ENCODE measurements at regions of chr14 and their contacts with region 1.

Region 1: DNA sequence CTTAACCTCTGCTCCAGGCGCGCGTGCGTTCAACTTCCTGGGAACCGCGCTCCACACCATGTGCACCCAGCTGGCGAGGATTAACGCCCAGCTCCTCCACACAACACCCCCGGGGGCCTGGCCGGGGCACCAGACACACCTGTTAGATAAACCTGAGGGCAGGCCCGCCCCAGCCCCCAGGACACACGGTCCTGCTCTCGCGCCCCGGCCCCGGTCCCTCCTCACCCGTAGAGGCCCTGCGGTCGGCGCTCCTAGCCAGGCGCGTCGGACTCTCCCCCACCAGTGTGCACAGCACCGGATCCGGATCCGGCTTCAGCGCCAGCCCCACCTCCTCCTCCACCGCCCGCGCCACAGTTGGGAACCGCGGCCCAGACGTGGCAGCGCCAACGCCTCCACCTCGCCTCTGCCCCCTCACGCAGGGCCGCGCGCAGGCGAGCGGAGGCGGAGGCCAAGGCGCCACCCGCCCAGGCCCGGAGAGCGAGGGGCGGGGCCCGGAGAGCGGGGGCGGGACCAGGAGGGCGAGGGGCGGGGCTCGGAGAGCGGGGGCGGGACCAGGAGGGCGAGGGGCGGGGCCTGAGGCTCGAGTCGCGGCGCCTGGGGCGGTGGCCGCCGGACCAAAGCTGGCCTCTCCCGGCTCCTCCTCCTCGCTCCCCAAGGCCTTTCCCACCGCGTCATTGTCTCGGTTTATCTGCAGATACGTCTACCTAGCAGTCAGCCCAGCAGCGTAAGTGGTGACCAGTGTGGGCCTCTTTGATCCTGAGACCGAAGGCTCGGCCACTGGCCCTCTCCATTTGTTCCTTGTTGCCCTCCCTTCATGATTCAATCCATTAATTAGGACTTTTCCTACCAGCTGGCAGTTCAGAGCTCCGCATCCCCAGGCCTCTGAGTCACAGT is at the start of gene GNPNAT1:
- DNase-seq: peak; percentile 90
- ATAC-seq: peak; percentile 91
- H3K4me3 Mint-ChIP-seq: peak within 1 kb of the TSS; percentile 95
- H3K27ac Mint-ChIP-seq: peak within 1 kb of the TSS; percentile 80
- H3K4me1 Mint-ChIP-seq: peaks cover 33% of the 10 kb centered on the region
- H3K27me3 Mint-ChIP-seq: no peaks in the 10 kb centered on the region
- total RNA-seq, gene GNPNAT1: 31.1 to 33.6 TPM

Region 2: GRCh38 chr14:51759950-51760349 is 1031.5 kb before region 1 on chr14:
- CTCF ChIA-PET with region 1: no interaction called
- POLR2A ChIA-PET with region 1: no interaction called
- intact Hi-C with region 1: no loop called
- DNase-seq: no peak
- ATAC-seq: no peak
- H3K4me3 Mint-ChIP-seq: no peak overlapping the region
- H3K27ac Mint-ChIP-seq: no peak overlapping the region
- H3K4me1 Mint-ChIP-seq: peaks cover 7% of the 10 kb centered on the region
- H3K27me3 Mint-ChIP-seq: peaks cover 7% of the 10 kb centered on the region

Region 3: DNA sequence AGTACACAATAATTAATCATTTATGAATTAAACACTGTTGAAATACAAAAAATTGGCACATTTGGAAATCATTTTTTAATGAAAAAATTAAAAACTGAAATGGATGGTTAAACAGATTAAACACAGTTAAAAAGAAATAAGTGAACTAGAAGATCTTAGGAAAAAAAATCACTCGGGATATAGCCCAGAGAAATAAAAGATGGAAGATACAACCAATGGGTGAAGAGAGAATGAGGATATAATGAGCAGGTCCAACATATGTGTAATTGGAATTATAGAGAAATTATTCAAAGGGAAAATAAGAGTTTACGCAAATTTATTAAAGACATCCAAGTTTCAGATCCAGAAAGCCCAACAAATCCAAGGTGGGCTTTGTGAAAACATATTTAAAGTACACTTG is 232.8 kb before region 1 on chr14:
- CTCF ChIA-PET with region 1: no interaction called
- POLR2A ChIA-PET with region 1: no interaction called
- intact Hi-C with region 1: no loop called
- DNase-seq: no peak
- ATAC-seq: no peak
- H3K4me3 Mint-ChIP-seq: no peak overlapping the region
- H3K27ac Mint-ChIP-seq: no peak overlapping the region
- H3K4me1 Mint-ChIP-seq: peaks cover under 1% of the 10 kb centered on the region
- H3K27me3 Mint-ChIP-seq: peaks cover 6% of the 10 kb centered on the region

Region 4: GRCh38 chr14:52706724-52707706 is 84.4 kb before region 1 on chr14 and contains the start of gene PSMC6:
- CTCF ChIA-PET with region 1: interaction called, 4 read pairs
- POLR2A ChIA-PET with region 1: no interaction called
- intact Hi-C with region 1: loop called (anchors 1 to 2 kb)
- DNase-seq: peak; percentile 98
- ATAC-seq: peak; percentile 96
- H3K4me3 Mint-ChIP-seq: peak within 1 kb of the TSS; percentile 91
- H3K27ac Mint-ChIP-seq: peak within 1 kb of the TSS; percentile 92
- H3K4me1 Mint-ChIP-seq: peaks cover 41% of the 10 kb centered on the region
- H3K27me3 Mint-ChIP-seq: no peaks in the 10 kb centered on the region
- total RNA-seq, gene PSMC6: 87.0 to 121 TPM

Region 5: DNA sequence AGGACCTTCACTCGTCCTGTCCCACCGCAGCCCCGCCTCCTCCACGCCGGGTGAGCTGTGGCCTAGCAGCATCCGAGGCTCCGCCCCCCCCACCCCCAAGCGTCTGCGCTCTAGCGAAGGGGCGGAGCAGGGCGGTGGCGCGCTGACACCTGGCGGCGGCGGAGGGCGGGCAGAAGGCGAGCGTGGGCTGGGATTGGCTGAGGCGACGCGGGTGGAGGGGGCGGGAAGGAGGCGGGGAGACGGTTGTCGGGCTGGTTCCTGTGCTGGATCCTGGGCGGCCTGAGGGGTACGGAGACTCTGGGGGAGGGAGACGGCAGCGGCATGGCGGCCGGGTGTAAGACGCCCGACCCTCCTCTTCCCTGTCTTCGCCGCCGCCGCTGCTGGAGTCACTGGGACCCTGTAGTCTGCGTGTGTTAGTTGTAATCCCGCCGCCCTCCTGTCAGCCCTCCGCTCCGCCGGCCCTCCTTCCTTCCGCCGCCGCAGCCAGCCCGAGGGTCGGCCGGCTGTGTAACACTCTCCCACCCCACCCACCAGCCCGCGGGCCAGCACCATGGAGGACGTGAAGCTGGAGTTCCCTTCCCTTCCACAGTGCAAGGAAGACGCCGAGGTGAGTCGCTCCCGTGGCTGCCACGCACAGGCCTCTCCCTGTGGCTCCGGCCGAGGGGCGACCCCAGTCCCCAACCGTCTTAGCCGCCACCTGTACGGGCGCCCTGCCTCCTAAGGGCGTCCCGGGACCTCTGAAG is 61.4 kb before region 1 on chr14 and contains the start of gene STYX:
- CTCF ChIA-PET with region 1: no interaction called
- POLR2A ChIA-PET with region 1: no interaction called
- intact Hi-C with region 1: loop called (anchors 1 kb)
- DNase-seq: peak; percentile 99
- ATAC-seq: peak; percentile 97
- H3K4me3 Mint-ChIP-seq: peak within 1 kb of the TSS; percentile 93
- H3K27ac Mint-ChIP-seq: peak within 1 kb of the TSS; percentile 90
- H3K4me1 Mint-ChIP-seq: peaks cover 33% of the 10 kb centered on the region
- H3K27me3 Mint-ChIP-seq: no peaks in the 10 kb centered on the region
- total RNA-seq, gene STYX: 13.1 to 13.3 TPM

Region 6: GRCh38 chr14:52741865-52742264 is 49.6 kb before region 1 on chr14:
- CTCF ChIA-PET with region 1: no interaction called
- POLR2A ChIA-PET with region 1: no interaction called
- intact Hi-C with region 1: loop called in 1 of 2 experiments (anchors 2 kb)
- DNase-seq: no peak
- ATAC-seq: no peak
- H3K4me3 Mint-ChIP-seq: peak overlapping the region; percentile 72
- H3K27ac Mint-ChIP-seq: peak overlapping the region; percentile 95
- H3K4me1 Mint-ChIP-seq: peaks cover 65% of the 10 kb centered on the region
- H3K27me3 Mint-ChIP-seq: no peaks in the 10 kb centered on the region

Region 7: DNA sequence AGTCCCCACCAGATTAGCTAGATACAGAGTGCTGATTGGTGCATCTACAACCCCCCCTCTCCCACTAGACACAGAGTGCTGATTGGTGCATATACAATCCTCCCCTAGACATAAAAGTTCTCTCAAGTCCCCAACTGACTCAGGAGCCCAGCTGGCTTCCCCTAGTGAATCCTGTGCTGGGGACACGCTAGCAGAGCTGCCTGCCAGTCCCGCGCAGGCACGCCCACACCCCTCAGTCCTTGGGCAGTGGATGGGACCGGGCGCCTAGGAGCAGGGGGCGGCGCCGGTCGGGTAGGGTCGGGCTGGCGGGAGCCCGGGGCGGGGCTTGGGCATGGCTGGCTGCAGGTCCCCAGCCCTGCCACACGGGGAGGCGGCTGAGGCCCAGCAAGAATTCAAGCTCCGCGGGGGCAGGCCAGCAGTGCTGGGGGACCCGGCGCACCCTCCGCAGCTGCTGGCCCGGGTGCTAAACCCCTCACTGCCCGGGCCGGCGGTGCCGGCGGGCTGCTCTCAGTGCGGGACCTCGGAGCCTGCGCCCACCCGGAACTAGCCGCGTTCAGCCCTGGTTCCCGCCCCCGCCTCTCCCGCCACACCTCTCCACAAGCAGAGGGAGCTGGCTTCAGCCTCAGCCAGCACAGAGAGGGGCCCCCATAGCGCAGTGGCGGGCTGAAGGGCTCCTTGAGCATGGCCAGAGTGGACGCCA is 426.0 kb after region 1 on chr14:
- CTCF ChIA-PET with region 1: no interaction called
- POLR2A ChIA-PET with region 1: no interaction called
- intact Hi-C with region 1: loop called in 1 of 2 experiments (anchors 2 kb)
- DNase-seq: peak; percentile 90
- ATAC-seq: peak; percentile 98
- H3K4me3 Mint-ChIP-seq: peak overlapping the region; percentile 74
- H3K27ac Mint-ChIP-seq: peak overlapping the region; percentile 83
- H3K4me1 Mint-ChIP-seq: peaks cover 5% of the 10 kb centered on the region
- H3K27me3 Mint-ChIP-seq: no peaks in the 10 kb centered on the region

Measured in activated CD4-positive, alpha-beta T cell treated with anti-CD3 and anti-CD28 coated beads for 36 hours (primary cell).